ENCODE measurements at regions of chr16 and their contacts with region 1.

Region 1: DNA sequence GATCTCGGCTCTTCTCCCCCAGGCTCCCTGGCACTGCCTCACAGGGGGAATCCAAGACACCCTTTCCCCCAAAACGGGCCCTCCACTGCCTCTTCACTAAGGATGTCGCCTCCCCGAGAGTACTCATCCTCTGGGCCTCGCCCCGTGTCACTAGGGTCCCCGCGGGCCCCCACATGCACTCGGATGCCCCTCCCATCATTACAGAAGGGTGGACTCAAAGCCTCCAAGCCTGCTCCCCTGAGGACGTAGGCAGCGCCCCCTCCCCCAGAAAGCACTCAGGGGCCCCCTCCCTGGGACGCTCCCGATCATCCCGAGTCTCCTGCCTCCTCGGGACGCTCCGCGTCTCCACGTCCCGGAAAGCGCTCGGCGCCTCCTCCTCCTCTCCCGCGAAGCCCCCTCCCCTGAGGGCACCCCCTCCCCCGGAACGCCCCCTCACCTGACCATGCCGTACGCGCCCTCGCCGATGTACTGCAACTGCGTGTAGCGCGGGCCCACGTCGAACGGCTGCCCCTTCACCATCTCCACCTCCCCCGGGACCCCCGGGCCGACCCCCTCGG is 338 bp downstream of the MAPK3 start:
- DNase-seq: peak in 1 of 5 donors; percentile 54
- H3K4me3 ChIP-seq: peak overlapping the region; percentile 52 to 82
- H3K4me3 Mint-ChIP-seq: peak overlapping the region; percentile 86 to 92 (median 90)
- H3K27ac ChIP-seq: peak overlapping the region; percentile 70
- H3K27ac Mint-ChIP-seq: peak overlapping the region; percentile 81 to 93 (median 88)
- H3K4me1 ChIP-seq: peaks cover 25% of the 10 kb centered on the region
- H3K4me1 Mint-ChIP-seq: peaks cover 8 to 38% (median 20%) of the 10 kb centered on the region in 4 donors
- H3K27me3 ChIP-seq: no peaks in the 10 kb centered on the region
- H3K27me3 Mint-ChIP-seq: no peaks in the 10 kb centered on the region

Region 2: GRCh38 chr16:30084816-30085159 is 37.9 kb before region 1 on chr16:
- CTCF ChIA-PET with region 1: no interaction called
- POLR2A ChIA-PET with region 1: no interaction called
- intact Hi-C with region 1: loop called (anchors 5 kb)
- DNase-seq: no peak
- H3K4me3 ChIP-seq: no peak overlapping the region
- H3K4me3 Mint-ChIP-seq: no peak overlapping the region
- H3K27ac ChIP-seq: no peak overlapping the region
- H3K27ac Mint-ChIP-seq: no peak overlapping the region
- H3K4me1 ChIP-seq: peaks cover under 1% of the 10 kb centered on the region
- H3K4me1 Mint-ChIP-seq: peaks cover 2 to 20% (median 11%) of the 10 kb centered on the region in 4 donors
- H3K27me3 ChIP-seq: no peaks in the 10 kb centered on the region
- H3K27me3 Mint-ChIP-seq: no peaks in the 10 kb centered on the region

Region 3: DNA sequence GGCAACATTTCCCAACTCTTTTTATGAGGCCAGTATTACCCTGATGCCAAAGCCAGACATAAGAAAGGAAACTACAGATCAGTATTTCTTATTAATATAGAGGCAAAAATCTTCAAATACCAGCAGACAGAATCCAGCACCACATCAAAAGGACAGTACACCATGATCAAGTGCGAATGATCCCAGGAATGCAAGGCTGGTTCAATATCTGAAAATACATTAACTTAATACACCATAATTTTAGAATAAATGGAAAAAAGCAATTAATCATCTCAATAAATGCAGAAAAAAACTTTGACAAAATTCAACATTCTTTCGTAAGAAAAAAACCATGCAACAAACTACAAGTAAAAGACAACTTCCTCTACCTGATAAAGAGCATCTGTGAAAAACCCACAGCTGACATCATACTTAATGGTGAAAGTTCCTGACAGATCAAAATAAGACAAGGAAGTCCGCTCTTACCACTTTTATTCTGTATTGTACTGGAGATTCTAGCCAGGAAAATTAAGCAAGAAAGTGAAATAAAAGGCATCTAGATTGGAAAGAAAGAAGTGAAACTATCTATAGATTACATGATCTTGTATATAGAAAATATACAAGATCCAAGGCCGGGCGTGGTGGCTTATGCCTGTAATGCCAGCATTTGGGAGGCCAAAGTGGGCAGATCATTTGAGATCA is 26.7 kb after region 1 on chr16:
- CTCF ChIA-PET with region 1: no interaction called
- POLR2A ChIA-PET with region 1: no interaction called
- intact Hi-C with region 1: no loop called
- DNase-seq: no peak
- H3K4me3 ChIP-seq: no peak overlapping the region
- H3K4me3 Mint-ChIP-seq: no peak overlapping the region
- H3K27ac ChIP-seq: no peak overlapping the region
- H3K27ac Mint-ChIP-seq: no peak overlapping the region
- H3K4me1 ChIP-seq: no peaks in the 10 kb centered on the region
- H3K4me1 Mint-ChIP-seq: peaks cover 0 to 5% (median 0%) of the 10 kb centered on the region in 4 donors
- H3K27me3 ChIP-seq: no peaks in the 10 kb centered on the region
- H3K27me3 Mint-ChIP-seq: no peaks in the 10 kb centered on the region

Region 4: DNA sequence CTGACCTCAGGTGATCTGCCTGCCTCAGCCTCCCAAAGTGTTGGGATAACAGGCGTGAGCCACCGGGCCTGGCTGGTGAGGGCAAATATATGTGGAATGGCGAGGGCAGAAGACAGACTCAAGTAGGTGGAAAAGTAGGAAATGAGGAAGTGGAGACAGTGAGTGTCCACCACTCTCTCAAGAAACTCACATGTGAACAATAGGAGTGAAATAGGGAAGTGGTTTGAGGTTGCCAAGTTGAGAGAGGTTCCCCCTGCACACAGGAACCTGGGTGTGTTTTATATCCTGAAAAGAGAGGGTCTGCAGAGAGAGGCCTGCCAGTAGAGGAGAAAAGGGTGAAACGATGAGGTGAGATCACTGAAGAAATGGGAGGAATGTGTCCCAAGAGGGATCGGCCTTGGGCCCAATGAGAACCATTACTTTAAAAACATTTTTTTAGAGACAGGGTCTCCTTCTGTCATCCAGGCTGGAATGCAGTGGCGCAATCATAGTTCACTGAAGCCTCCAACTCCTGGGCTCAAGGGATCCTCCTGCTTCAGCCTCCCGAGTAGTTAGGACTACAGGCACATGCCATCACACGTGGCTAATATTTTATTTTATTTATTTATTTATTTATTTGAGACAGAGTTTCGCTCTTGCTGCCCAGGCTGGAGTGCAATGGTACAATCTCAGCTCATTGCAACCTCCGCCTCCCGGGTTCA is 43.7 kb after region 1 on chr16:
- CTCF ChIA-PET with region 1: no interaction called
- POLR2A ChIA-PET with region 1: no interaction called
- intact Hi-C with region 1: no loop called
- DNase-seq: peak in 1 of 5 donors; percentile 20
- H3K4me3 ChIP-seq: no peak overlapping the region
- H3K4me3 Mint-ChIP-seq: peak overlapping the region in 7 of 8 donors; percentile 25 to 85 (median 49)
- H3K27ac ChIP-seq: no peak overlapping the region
- H3K27ac Mint-ChIP-seq: peak overlapping the region in 4 of 7 donors; percentile 60 to 87 (median 76)
- H3K4me1 ChIP-seq: peaks cover 11% of the 10 kb centered on the region
- H3K4me1 Mint-ChIP-seq: peaks cover 20 to 39% (median 29%) of the 10 kb centered on the region in 4 donors
- H3K27me3 ChIP-seq: no peaks in the 10 kb centered on the region
- H3K27me3 Mint-ChIP-seq: no peaks in the 10 kb centered on the region

Region 5: GRCh38 chr16:30355144-30355894 is 232.6 kb after region 1 on chr16 and contains the start of gene CD2BP2:
- CTCF ChIA-PET with region 1: no interaction called
- POLR2A ChIA-PET with region 1: no interaction called
- intact Hi-C with region 1: no loop called
- DNase-seq: peak; percentile 84 to 87 (median 86)
- H3K4me3 ChIP-seq: peak within 1 kb of the TSS; percentile 94 to 98
- H3K4me3 Mint-ChIP-seq: peak within 1 kb of the TSS; percentile 90 to 98 (median 96)
- H3K27ac ChIP-seq: peak within 1 kb of the TSS; percentile 95
- H3K27ac Mint-ChIP-seq: peak within 1 kb of the TSS; percentile 96 to 99 (median 98)
- H3K4me1 ChIP-seq: peaks cover 32% of the 10 kb centered on the region
- H3K4me1 Mint-ChIP-seq: peaks cover 13 to 46% (median 26%) of the 10 kb centered on the region in 4 donors
- H3K27me3 ChIP-seq: no peaks in the 10 kb centered on the region
- H3K27me3 Mint-ChIP-seq: no peaks in the 10 kb centered on the region
- total RNA-seq, gene CD2BP2: 72.9 to 79.4 TPM

Measured in CD4-positive, alpha-beta memory T cell (primary cell).